ENCODE measurements at regions of chrX and their contacts with region 1.

Region 1: GRCh38 chrX:50756276-50756675 is 57.7 kb downstream of the SHROOM4 start:
- DNase-seq: no peak
- ATAC-seq: no peak
- H3K4me3 ChIP-seq: no peak overlapping the region
- H3K27ac ChIP-seq: no peak overlapping the region
- H3K4me1 ChIP-seq: no peaks in the 10 kb centered on the region
- H3K27me3 ChIP-seq: no peaks in the 10 kb centered on the region
- CTCF ChIP-seq: no peak

Region 2: DNA sequence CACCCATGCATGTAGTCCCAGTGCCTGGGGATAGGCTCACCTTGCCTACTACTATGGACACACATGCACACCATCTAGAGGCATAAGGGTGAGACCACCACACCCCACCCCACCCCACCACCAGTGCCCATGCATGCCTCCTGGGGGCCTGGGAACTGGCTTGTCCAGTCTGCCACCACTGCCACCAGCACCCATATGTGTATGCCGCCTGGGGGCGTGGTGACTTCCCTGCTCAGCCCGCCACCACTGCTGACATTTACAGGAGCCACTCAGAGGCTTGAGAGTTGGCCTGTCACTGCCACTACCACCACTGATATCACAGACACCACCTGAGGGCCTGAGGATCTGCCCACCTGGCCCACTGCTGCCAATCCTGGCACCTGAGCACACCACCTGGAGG is 133.9 kb after region 1 on chrX:
- intact Hi-C with region 1: loop called (anchors 10 kb)
- DNase-seq: no peak
- ATAC-seq: no peak
- H3K4me3 ChIP-seq: no peak overlapping the region
- H3K27ac ChIP-seq: no peak overlapping the region
- H3K4me1 ChIP-seq: no peaks in the 10 kb centered on the region
- H3K27me3 ChIP-seq: no peaks in the 10 kb centered on the region
- CTCF ChIP-seq: no peak